Adrenal gland (tissue), 19 donors: ENCODE measurements at regions of chr1 and their contacts with region 1.

Region 1: DNA sequence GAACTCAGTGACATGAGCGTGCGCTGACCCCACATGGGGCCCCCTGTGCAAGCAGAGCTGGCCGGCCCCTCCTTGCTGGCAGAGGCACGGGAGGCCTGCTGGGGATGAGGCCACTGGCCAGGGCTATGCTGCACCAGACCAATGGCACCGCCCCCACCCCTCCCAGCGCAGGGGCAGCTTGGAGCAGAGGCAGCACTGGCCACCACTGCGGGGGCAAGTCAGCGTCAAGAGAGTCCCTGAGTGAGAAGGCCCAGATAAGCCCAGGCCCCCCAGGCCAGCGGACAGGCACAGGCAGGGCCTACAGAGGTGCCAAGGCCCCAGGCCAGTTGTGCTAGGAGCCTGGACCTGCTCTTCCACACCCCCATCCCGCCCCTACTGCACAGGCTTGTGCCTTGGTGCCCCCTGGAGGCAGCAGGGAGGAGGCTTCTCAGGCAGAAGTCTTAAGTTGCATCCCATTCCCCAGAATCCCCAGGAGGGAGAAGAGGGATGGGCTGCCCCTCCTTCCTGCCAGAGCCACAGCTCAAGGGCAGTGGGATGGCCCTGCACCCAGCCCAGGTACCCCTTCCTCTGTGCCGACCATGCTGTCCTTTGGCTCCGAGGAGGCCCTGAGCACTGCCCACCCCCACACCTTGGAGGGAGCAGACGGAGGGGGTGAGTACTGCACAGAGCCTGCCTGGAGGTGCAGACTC is 35.8 kb downstream of the EPHX1 start:
- DNase-seq: peak; percentile 79 to 89 (median 87)
- H3K4me3 ChIP-seq: no peak overlapping the region
- H3K27ac ChIP-seq: peak overlapping the region in 3 of 5 donors; percentile 42 to 80 (median 54)
- H3K4me1 ChIP-seq: peaks cover 4 to 11% of the 10 kb centered on the region in 2 donors
- H3K27me3 ChIP-seq: no peaks in the 10 kb centered on the region
- CTCF ChIP-seq: peak; percentile 45 to 80 (median 69)
- POLR2A ChIP-seq: peak in 1 of 2 donors; percentile 12

Region 2: GRCh38 chr1:225670806-225671733 is 174.6 kb before region 1 on chr1:
- intact Hi-C with region 1: no loop called
- DNase-seq: peak in 1 of 7 donors; percentile 38
- H3K4me3 ChIP-seq: no peak overlapping the region
- H3K27ac ChIP-seq: no peak overlapping the region
- H3K4me1 ChIP-seq: no peaks in the 10 kb centered on the region
- H3K27me3 ChIP-seq: no peaks in the 10 kb centered on the region
- CTCF ChIP-seq: no peak
- POLR2A ChIP-seq: no peak

Region 3: GRCh38 chr1:225896937-225897549 is 51.3 kb after region 1 on chr1:
- intact Hi-C with region 1: no loop called
- DNase-seq: no peak
- H3K4me3 ChIP-seq: no peak overlapping the region
- H3K27ac ChIP-seq: no peak overlapping the region
- H3K4me1 ChIP-seq: no peaks in the 10 kb centered on the region
- H3K27me3 ChIP-seq: no peaks in the 10 kb centered on the region
- CTCF ChIP-seq: no peak
- POLR2A ChIP-seq: no peak

Region 4: GRCh38 chr1:225911191-225912130 is 65.7 kb after region 1 on chr1:
- intact Hi-C with region 1: loop called in 1 of 2 experiments (anchors 10 kb)
- DNase-seq: peak; percentile 53 to 78 (median 69)
- H3K4me3 ChIP-seq: peak overlapping the region in 2 of 4 donors; percentile 13 to 39
- H3K27ac ChIP-seq: no peak overlapping the region
- H3K4me1 ChIP-seq: peaks cover 10 to 12% of the 10 kb centered on the region in 2 donors
- H3K27me3 ChIP-seq: no peaks in the 10 kb centered on the region
- CTCF ChIP-seq: peak; percentile 73 to 96 (median 88)
- POLR2A ChIP-seq: no peak

Region 5: DNA sequence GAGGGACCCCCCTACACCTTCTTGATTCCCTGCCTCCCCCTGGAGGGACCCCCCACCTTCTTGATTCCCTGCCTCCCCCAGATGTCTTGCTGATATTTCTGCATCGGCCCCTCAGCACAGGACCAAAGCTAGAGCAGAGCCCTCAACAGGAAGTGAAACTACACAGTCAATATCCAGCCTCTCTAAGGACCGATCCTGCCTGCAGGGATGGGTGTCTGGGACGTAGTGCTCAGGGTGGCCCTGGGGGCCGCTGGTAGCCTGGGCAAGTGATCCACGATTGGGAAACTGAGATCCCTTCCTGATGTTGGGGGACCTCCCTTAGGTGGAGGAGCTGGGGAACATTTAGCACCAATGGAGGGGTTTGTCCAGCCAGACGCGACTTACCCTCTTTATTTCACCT is 99.2 kb after region 1 on chr1:
- intact Hi-C with region 1: no loop called
- DNase-seq: no peak
- H3K4me3 ChIP-seq: no peak overlapping the region
- H3K27ac ChIP-seq: no peak overlapping the region
- H3K4me1 ChIP-seq: peaks cover 0 to 9% of the 10 kb centered on the region in 2 donors
- H3K27me3 ChIP-seq: no peaks in the 10 kb centered on the region
- CTCF ChIP-seq: no peak
- POLR2A ChIP-seq: no peak